Activated T-helper 1 cell treated with anti-CD3 and anti-CD28 coated beads, Interleukin-12 subunit alpha, Interleukin-12 subunit beta, Interleukin-2, Interleukin-4 antibody, amounts not matched to agents 30 ng/mL and 10 ng/mL and 1 ng/mL, durations not matched to agents 14 hours and 24 hours and 36 hours (primary cell): ENCODE measurements at regions of chr1 and their contacts with region 1.

Region 1: GRCh38 chr1:183635606-183636333 is at the start of gene ARPC5:
- DNase-seq: peak; percentile 96
- H3K4me3 Mint-ChIP-seq: peak within 1 kb of the TSS; percentile 100
- H3K27ac Mint-ChIP-seq: peak within 1 kb of the TSS; percentile 100
- H3K4me1 Mint-ChIP-seq: peaks cover 46% of the 10 kb centered on the region
- H3K27me3 Mint-ChIP-seq: peaks cover 4% of the 10 kb centered on the region
- total RNA-seq, gene ARPC5: 146 and 154 TPM in 2 replicates

Region 2: GRCh38 chr1:182839209-182840065 is 796.3 kb before region 1 on chr1 and contains the start of gene DHX9:
- intact Hi-C with region 1: loop called (anchors 10 kb)
- DNase-seq: peak; percentile 94
- H3K4me3 Mint-ChIP-seq: peak within 1 kb of the TSS; percentile 94
- H3K27ac Mint-ChIP-seq: peak within 1 kb of the TSS; percentile 98
- H3K4me1 Mint-ChIP-seq: peaks cover 47% of the 10 kb centered on the region
- H3K27me3 Mint-ChIP-seq: peaks cover 3% of the 10 kb centered on the region
- total RNA-seq, gene DHX9: 346 and 355 TPM in 2 replicates

Region 3: DNA sequence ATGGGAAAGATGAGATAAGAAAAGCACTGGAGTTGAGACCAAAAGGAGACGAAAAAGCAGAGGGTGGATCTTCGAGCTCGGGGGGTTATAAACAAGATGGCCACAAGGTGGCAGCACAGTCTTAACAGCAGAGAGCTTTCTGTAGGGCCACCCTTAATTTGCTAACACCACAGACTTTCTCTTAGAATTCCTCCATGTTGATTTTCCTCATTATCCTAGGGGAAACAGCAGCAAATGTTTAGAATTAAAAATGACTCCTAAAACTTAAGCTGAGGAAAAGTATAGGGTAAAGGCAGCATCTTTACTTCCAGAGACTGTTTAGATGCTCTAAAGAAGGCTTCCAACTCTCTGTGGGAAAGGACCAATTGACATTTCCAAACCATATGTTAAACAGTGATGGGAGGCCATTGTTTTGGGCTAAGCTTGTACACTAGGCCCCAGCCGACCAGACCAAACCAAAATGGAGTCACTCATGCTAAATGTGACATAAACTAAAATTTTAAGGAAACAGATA is 19.8 kb after region 1 on chr1:
- intact Hi-C with region 1: loop called (anchors 1 kb)
- DNase-seq: peak; percentile 52
- H3K4me3 Mint-ChIP-seq: no peak overlapping the region
- H3K27ac Mint-ChIP-seq: peak overlapping the region; percentile 0
- H3K4me1 Mint-ChIP-seq: peaks cover 48% of the 10 kb centered on the region
- H3K27me3 Mint-ChIP-seq: no peaks in the 10 kb centered on the region

Region 4: GRCh38 chr1:184051485-184052193 is 415.9 kb after region 1 on chr1 and contains the start of gene TSEN15:
- intact Hi-C with region 1: loop called (anchors 2 kb)
- DNase-seq: peak; percentile 71
- H3K4me3 Mint-ChIP-seq: peak within 1 kb of the TSS; percentile 99
- H3K27ac Mint-ChIP-seq: peak within 1 kb of the TSS; percentile 99
- H3K4me1 Mint-ChIP-seq: peaks cover 40% of the 10 kb centered on the region
- H3K27me3 Mint-ChIP-seq: peaks cover 28% of the 10 kb centered on the region
- total RNA-seq, gene TSEN15: 49.8 and 50.2 TPM in 2 replicates